Activated naive CD4-positive, alpha-beta T cell treated with anti-CD3 and anti-CD28 coated beads for 36 hours (primary cell): ENCODE measurements at regions of chr1 and their contacts with region 1.

Region 1: GRCh38 chr1:206489980-206490770 is 17.2 kb upstream of the RASSF5 start:
- DNase-seq: peak; percentile 87
- H3K4me3 Mint-ChIP-seq: no peak overlapping the region
- H3K27ac Mint-ChIP-seq: no peak overlapping the region
- H3K4me1 Mint-ChIP-seq: no peaks in the 10 kb centered on the region
- H3K27me3 Mint-ChIP-seq: no peaks in the 10 kb centered on the region

Region 2: GRCh38 chr1:206725109-206725963 is 235.2 kb after region 1 on chr1:
- CTCF ChIA-PET with region 1: no interaction called
- intact Hi-C with region 1: loop called (anchors 5 kb)
- DNase-seq: peak; percentile 84
- H3K4me3 Mint-ChIP-seq: no peak overlapping the region
- H3K27ac Mint-ChIP-seq: no peak overlapping the region
- H3K4me1 Mint-ChIP-seq: peaks cover 39% of the 10 kb centered on the region
- H3K27me3 Mint-ChIP-seq: no peaks in the 10 kb centered on the region